ENCODE measurements at regions of chr4 and their contacts with region 1.

Region 1: GRCh38 chr4:152735396-152735859 is 44.1 kb downstream of the TIGD4 start:
- DNase-seq: peak in 1 of 2 donors; percentile 47
- ATAC-seq: peak in 2 of 3 donors; percentile 44 to 45
- H3K4me3 ChIP-seq: no peak overlapping the region
- H3K4me3 Mint-ChIP-seq: no peak overlapping the region
- H3K27ac ChIP-seq: no peak overlapping the region
- H3K27ac Mint-ChIP-seq: no peak overlapping the region
- H3K4me1 ChIP-seq: no peaks in the 10 kb centered on the region
- H3K4me1 Mint-ChIP-seq: peaks cover 0 to 4% of the 10 kb centered on the region in 2 donors
- H3K27me3 ChIP-seq: no peaks in the 10 kb centered on the region
- H3K27me3 Mint-ChIP-seq: peaks cover 3 to 6% of the 10 kb centered on the region in 2 donors
- CTCF ChIP-seq: peak; percentile 49

Region 2: DNA sequence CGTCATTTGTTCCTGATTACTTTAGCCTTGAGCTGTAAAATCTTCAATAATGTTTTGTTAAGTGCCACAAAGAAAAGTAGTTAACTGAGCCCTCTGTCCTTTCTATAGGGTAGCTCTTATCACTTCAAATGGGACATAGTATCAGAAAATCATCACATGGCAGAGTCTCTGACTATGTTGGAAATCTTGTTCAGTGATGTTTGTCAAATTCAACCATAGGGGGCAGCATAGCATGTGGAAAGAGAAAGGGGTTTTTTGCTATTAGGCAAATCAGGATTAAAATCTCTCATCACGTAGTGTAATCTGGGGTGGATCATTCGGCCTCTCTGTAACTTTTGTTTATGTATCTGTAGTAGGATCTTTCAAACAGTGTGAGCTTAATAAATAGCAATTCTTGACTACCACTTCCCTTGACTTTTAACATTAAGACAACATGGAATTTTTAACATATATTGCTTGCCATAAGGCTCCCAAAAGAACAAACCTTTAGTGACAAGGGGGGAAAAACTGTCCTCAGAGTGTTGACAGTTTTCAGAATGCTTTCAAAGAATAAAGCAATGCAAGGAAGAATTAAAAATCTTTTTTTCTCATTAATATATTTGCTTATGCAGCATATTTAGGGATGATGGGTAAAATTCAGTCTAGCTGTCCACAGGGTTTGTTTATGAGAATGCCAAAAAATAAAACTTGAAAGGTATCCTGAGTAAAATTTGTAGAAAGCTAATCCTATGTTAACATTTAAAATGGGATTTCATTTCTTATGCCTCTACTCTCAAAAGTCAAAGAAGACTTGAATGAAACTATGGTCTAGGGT is 326.7 kb before region 1 on chr4:
- intact Hi-C with region 1: loop called (anchors 2 kb)
- DNase-seq: peak in 1 of 2 donors; percentile 66
- ATAC-seq: peak; percentile 55 to 73 (median 63)
- H3K4me3 ChIP-seq: no peak overlapping the region
- H3K4me3 Mint-ChIP-seq: no peak overlapping the region
- H3K27ac ChIP-seq: no peak overlapping the region
- H3K27ac Mint-ChIP-seq: peak overlapping the region; percentile 64 to 67
- H3K4me1 ChIP-seq: no peaks in the 10 kb centered on the region
- H3K4me1 Mint-ChIP-seq: peaks cover 18 to 28% of the 10 kb centered on the region in 2 donors
- H3K27me3 ChIP-seq: no peaks in the 10 kb centered on the region
- H3K27me3 Mint-ChIP-seq: no peaks in the 10 kb centered on the region
- CTCF ChIP-seq: peak; percentile 36

Region 3: GRCh38 chr4:152454398-152455011 is 280.9 kb before region 1 on chr4:
- intact Hi-C with region 1: loop called (anchors 2 kb)
- DNase-seq: peak in 1 of 2 donors; percentile 11
- ATAC-seq: peak in 1 of 3 donors; percentile 28
- H3K4me3 ChIP-seq: no peak overlapping the region
- H3K4me3 Mint-ChIP-seq: peak overlapping the region; percentile 38
- H3K27ac ChIP-seq: no peak overlapping the region
- H3K27ac Mint-ChIP-seq: no peak overlapping the region
- H3K4me1 ChIP-seq: peaks cover 12% of the 10 kb centered on the region
- H3K4me1 Mint-ChIP-seq: peaks cover 39 to 47% of the 10 kb centered on the region in 2 donors
- H3K27me3 ChIP-seq: no peaks in the 10 kb centered on the region
- H3K27me3 Mint-ChIP-seq: no peaks in the 10 kb centered on the region
- CTCF ChIP-seq: peak; percentile 44

Region 4: DNA sequence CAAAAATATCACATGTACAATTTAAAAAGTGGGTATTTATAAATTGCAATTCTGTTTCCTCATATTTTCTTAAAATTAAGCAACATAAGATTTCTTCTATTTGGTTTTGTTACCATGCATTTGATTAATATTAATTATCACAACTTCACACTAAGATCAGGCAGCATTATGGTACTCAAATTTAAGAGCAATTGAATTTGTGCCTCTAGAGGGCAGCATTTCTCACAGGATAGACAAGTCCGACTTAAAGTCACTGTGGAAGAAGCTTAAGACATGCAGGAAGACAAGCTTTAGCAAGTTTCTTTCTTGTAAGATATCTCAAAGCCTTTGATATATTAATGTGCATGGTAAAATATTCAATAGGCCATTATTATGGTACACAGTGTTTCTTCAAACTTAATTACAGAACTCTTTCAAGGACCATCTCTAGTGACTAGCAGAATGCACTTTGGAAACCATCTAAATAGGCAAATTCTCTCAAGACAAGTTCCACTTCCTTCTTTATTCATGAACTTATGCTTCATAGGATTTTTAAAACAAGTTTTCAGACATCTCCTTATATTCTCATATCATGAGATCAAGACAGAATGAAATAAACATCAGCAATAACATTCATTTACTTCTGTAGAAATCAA is 234.5 kb before region 1 on chr4:
- intact Hi-C with region 1: loop called (anchors 1 kb)
- DNase-seq: peak in 1 of 2 donors; percentile 92
- ATAC-seq: peak; percentile 82 to 89 (median 88)
- H3K4me3 ChIP-seq: no peak overlapping the region
- H3K4me3 Mint-ChIP-seq: no peak overlapping the region
- H3K27ac ChIP-seq: no peak overlapping the region
- H3K27ac Mint-ChIP-seq: peak overlapping the region in 1 of 2 donors; percentile 60
- H3K4me1 ChIP-seq: peaks cover 4% of the 10 kb centered on the region
- H3K4me1 Mint-ChIP-seq: peaks cover 44 to 48% of the 10 kb centered on the region in 2 donors
- H3K27me3 ChIP-seq: no peaks in the 10 kb centered on the region
- H3K27me3 Mint-ChIP-seq: no peaks in the 10 kb centered on the region
- CTCF ChIP-seq: peak; percentile 91